B cell (primary cell): ENCODE measurements at regions of chr19 and their contacts with region 1.

Region 1: GRCh38 chr19:42989851-42990250 is 36.4 kb downstream of the PSG11 start:
- DNase-seq: no peak
- ATAC-seq: no peak
- H3K4me3 ChIP-seq: no peak overlapping the region
- H3K4me3 Mint-ChIP-seq: no peak overlapping the region
- H3K27ac ChIP-seq: no peak overlapping the region
- H3K27ac Mint-ChIP-seq: no peak overlapping the region
- H3K4me1 ChIP-seq: no peaks in the 10 kb centered on the region
- H3K4me1 Mint-ChIP-seq: no peaks in the 10 kb centered on the region
- H3K27me3 ChIP-seq: no peaks in the 10 kb centered on the region
- H3K27me3 Mint-ChIP-seq: peaks cover 11% of the 10 kb centered on the region
- CTCF ChIP-seq: no peak

Region 2: DNA sequence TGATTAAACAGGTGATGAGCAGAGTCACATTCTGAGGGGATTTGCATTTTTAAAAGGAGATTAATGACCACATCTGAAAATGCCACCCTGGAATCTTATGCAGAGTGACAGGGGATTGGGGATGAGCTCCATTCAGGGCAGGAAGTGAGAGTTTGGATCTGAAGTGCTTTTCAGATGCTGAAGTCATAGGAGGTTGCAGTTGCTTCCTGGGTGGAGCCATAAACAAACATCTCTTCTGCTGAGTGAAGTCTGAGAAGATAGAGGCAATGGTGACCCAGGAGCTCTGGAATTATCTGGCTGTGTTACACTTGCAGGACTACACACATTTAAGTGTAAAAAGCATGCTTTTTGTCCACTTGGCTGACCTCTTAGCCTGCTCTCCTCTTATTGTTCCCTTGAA is 173.0 kb before region 1 on chr19:
- CTCF ChIA-PET with region 1: no interaction called
- POLR2A ChIA-PET with region 1: no interaction called
- intact Hi-C with region 1: loop called (anchors 10 kb)
- DNase-seq: no peak
- ATAC-seq: no peak
- H3K4me3 ChIP-seq: no peak overlapping the region
- H3K4me3 Mint-ChIP-seq: no peak overlapping the region
- H3K27ac ChIP-seq: no peak overlapping the region
- H3K27ac Mint-ChIP-seq: no peak overlapping the region
- H3K4me1 ChIP-seq: no peaks in the 10 kb centered on the region
- H3K4me1 Mint-ChIP-seq: no peaks in the 10 kb centered on the region
- H3K27me3 ChIP-seq: no peaks in the 10 kb centered on the region
- H3K27me3 Mint-ChIP-seq: peaks cover 20% of the 10 kb centered on the region
- CTCF ChIP-seq: no peak